Activated CD4-positive, alpha-beta T cell treated with anti-CD3 and anti-CD28 coated beads for 36 hours (primary cell): ENCODE measurements at regions of chr1 and their contacts with region 1.

Region 1: DNA sequence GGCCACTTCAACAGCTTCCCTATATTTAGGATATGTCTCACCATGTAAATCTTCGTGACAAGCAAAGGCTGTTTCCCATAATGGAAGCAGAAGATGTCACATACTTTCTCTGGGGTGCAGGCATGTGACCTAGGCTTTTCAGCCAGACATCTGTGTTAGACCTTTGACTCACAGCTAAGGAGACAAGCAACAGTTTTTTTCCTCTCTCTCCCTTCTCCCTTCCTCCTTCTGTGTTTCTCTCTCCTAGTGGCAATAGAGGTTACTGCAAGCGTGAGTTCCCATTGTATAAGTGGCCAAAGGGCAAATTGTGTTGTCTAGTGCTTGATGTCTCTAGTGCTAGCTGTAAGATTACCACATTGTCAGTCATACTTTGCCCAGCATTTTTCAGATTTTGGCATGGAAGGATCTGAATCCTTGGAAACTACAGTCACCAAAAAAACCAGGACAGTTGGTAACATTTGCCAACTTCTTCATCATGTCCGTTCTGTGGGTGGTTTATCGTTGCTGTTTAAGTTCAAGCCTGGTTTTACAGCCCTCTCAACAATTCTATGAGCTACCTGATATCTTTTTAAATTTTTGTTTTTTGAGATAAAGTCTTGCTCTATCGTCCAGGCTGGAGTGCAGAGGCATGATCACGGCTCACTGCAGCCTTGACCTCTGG is 44.4 kb upstream of the RABGAP1L start:
- DNase-seq: peak; percentile 28
- ATAC-seq: peak; percentile 89
- H3K4me3 Mint-ChIP-seq: no peak overlapping the region
- H3K27ac Mint-ChIP-seq: no peak overlapping the region
- H3K4me1 Mint-ChIP-seq: no peaks in the 10 kb centered on the region
- H3K27me3 Mint-ChIP-seq: no peaks in the 10 kb centered on the region

Region 2: DNA sequence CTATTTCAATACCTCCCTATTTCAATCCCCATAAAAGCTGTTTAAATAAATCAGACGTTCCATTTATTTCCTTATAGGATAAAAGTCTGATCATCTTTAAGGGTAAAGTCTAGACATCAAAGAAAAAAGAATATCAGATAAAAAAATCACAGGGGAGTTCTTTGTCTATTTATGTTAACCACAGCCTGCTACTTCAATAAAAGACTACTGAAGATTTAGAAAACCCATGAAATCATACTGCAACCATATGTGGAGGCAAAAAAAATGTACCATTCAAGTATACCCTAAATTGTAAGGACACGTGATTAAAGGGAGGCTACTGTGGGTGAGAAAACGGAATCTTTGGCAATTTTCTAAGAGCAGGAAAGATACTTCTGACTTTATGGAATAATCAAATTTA is 799.6 kb before region 1 on chr1:
- CTCF ChIA-PET with region 1: no interaction called
- POLR2A ChIA-PET with region 1: no interaction called
- intact Hi-C with region 1: no loop called
- DNase-seq: no peak
- ATAC-seq: no peak
- H3K4me3 Mint-ChIP-seq: no peak overlapping the region
- H3K27ac Mint-ChIP-seq: no peak overlapping the region
- H3K4me1 Mint-ChIP-seq: no peaks in the 10 kb centered on the region
- H3K27me3 Mint-ChIP-seq: no peaks in the 10 kb centered on the region

Region 3: DNA sequence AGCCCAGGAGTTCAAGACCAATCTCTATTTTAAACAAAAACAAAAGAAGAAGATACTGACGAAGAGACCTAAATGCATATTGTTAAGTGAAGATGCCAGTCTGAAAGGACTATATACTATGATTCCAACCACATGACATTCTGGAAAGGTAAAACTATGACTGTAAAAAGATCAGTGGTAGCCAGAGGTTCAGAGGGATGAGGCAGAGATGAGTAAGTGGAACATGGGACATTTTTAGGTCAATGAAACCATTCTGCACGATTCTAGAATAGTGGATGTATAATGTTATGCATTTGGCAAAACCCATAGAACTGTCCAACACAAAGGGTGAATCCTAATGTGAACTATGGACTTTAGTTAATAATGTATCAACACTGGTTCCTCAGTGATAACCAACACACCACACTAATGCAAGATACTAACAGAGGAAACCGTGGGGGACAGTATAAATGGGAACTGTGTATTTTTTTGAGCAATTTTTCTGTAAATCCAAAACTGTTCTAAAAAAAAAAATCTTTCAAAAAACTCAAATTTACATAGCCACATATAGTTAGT is 101.0 kb before region 1 on chr1:
- CTCF ChIA-PET with region 1: no interaction called
- POLR2A ChIA-PET with region 1: no interaction called
- intact Hi-C with region 1: no loop called
- DNase-seq: no peak
- ATAC-seq: peak; percentile 93
- H3K4me3 Mint-ChIP-seq: no peak overlapping the region
- H3K27ac Mint-ChIP-seq: peak overlapping the region; percentile 51
- H3K4me1 Mint-ChIP-seq: peaks cover 51% of the 10 kb centered on the region
- H3K27me3 Mint-ChIP-seq: no peaks in the 10 kb centered on the region

Region 4: GRCh38 chr1:174097426-174097825 is 17.5 kb before region 1 on chr1:
- CTCF ChIA-PET with region 1: interaction called, 11 read pairs
- POLR2A ChIA-PET with region 1: no interaction called
- intact Hi-C with region 1: no loop called
- DNase-seq: no peak
- ATAC-seq: no peak
- H3K4me3 Mint-ChIP-seq: no peak overlapping the region
- H3K27ac Mint-ChIP-seq: no peak overlapping the region
- H3K4me1 Mint-ChIP-seq: no peaks in the 10 kb centered on the region
- H3K27me3 Mint-ChIP-seq: no peaks in the 10 kb centered on the region